ENCODE measurements at regions of chr6 and their contacts with region 1.

Region 1: GRCh38 chr6:99613409-99613704 is 6.7 kb downstream of the PRDM13 start:
- DNase-seq: no peak

Region 2: DNA sequence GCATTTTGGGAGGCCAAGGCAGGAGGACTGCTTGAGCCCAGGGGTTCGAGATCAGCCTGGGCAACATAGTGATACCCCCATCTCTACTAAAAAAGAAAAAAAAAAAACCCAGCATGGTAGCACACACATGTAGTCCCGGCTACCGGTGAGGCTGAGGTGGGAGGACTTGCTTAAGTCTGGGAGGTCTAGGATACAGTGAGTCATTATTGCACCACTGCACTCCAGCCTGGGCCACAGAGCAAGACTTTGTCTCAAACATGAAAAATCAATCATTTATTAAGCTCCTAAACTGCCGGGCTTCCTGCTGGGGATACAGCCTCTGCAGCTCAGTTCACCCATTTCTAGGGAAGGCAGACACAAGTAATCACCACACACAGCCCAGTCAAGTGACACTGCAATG is 90.8 kb before region 1 on chr6:
- intact Hi-C with region 1: no loop called
- DNase-seq: no peak

Region 3: DNA sequence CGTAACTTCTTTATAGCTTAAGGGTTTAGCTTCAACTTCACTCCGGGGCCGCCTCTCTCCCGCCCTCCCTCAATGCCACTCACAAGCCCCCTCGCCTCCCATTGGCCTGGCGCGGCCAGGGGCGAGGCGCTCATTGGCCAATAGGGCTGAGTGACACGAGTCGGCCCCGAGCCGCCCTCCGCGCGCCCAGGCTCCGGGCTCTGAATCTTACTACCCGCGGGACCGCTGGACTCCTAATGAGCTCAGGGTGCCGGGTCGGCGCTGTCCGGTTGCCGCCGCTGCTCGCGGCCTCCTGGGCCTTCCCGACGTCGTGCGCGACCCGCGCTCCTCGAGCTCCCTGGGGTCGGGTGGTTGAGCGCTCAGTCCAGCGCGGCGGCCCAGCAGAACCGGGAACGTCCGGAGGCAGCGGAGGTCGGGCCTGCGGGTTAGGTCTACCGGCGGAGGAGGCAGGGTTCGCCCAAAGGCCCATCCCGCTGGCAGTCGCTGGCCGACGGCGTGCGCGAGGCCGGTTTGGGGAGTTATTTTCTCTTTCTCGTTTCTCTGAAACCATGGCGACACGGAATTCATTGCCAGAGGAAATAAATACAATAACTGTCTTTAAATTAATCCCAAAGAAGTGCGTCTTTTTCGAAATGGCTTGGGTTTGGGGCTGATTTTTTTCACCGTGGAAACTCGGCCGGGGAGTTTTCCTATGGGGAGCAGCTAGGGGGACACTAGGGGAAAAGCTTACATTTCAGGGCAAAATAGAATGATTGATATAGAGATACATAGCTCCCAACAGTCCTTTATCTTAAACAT is 851.7 kb after region 1 on chr6 and contains the start of gene SIM1:
- intact Hi-C with region 1: loop called (anchors 10 kb)
- DNase-seq: peak in 1 of 10 donors; percentile 84

Measured in posterior cingulate gyrus (tissue), 11 donors.